Dorsolateral prefrontal cortex (tissue), 120 donors: ENCODE measurements at regions of chr16 and their contacts with region 1.

Region 1: DNA sequence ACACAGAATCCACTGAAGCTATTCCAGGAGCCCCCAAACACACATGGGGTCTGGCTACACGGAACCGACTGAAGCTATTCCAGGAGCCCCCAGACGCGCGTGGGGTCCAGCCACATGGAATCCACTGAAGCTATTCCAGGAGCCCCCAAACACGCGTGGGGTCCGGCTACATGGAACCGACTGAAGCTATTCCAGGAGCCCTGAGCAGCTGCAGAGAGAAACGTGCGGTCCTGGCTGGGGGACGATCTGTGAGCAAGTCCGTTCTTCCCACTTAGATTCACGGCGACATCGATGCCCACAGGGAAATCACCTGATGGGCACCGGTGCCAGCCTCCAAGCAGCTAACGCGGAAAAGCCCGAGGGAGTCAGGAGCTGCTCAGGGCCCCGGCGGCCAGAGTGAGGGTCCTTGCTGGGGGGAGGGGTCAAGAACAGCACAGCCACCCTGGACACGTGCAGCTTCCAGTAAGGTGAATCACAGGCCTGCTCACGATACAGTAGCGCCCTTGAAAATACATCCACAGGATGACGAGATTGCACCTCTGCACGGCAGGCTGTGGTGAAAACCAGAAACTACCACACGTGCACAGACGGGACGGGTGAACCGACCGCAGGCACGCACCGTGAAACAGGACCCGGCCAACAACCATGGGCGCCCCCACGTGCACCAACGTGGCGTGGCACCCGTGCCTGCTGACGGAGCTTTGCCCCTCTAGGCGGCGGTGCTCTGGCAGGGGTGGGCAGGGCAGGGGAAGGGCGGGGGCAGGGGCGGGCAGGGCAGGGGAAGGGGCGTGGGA is 77.7 kb upstream of the GNG13 start:
- DNase-seq: peak in 1 of 10 donors; percentile 41
- H3K4me3 ChIP-seq: no peak overlapping the region
- H3K27ac ChIP-seq: no peak overlapping the region
- H3K27me3 ChIP-seq: no peaks in the 10 kb centered on the region
- CTCF ChIP-seq: peak in 5 of 56 donors; percentile 10 to 27 (median 14)

Region 2: DNA sequence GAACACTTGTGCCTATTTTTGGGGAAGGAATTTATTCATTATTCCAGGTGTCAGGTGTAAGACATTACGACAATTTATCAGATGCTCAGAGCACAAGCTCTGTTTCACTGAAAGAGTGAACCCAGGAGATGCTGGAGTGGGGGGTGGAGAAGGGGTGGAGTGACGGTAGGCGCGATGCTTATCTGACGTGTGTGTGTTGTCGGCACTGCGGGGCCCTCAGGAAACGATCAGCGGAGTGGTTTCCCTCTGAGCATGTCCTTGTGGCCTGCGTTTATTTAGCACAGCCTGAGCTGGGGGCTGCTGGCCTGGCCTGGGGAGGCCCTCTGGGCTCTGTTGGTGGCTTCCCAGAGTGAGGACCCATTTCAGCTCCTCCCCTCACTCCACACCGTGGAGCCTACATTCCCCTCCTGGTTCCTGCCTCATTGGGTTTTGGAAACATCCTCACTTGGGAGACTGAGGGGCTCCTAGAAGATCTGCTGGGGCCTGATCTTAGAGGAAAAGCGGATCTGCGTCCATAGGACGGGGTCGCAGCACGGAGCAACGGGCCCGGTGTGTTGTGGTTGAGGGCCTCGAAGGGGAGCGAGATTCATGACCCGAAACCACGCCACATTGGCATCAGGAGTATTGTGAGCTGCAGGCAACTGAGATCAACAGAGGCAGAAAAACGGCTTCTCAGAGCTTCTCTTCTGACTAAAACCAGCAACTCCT is 58.7 kb before region 1 on chr16:
- intact Hi-C with region 1: loop called (anchors 5 to 10 kb)
- DNase-seq: no peak
- H3K4me3 ChIP-seq: no peak overlapping the region
- H3K27ac ChIP-seq: no peak overlapping the region
- H3K27me3 ChIP-seq: peaks cover 0 to 30% (median 5%) of the 10 kb centered on the region in 45 donors
- CTCF ChIP-seq: no peak

Region 3: GRCh38 chr16:931626-932500 is 53.7 kb after region 1 on chr16:
- intact Hi-C with region 1: no loop called
- DNase-seq: peak in 1 of 10 donors; percentile 16
- H3K4me3 ChIP-seq: no peak overlapping the region
- H3K27ac ChIP-seq: no peak overlapping the region
- H3K27me3 ChIP-seq: no peaks in the 10 kb centered on the region
- CTCF ChIP-seq: no peak

Region 4: DNA sequence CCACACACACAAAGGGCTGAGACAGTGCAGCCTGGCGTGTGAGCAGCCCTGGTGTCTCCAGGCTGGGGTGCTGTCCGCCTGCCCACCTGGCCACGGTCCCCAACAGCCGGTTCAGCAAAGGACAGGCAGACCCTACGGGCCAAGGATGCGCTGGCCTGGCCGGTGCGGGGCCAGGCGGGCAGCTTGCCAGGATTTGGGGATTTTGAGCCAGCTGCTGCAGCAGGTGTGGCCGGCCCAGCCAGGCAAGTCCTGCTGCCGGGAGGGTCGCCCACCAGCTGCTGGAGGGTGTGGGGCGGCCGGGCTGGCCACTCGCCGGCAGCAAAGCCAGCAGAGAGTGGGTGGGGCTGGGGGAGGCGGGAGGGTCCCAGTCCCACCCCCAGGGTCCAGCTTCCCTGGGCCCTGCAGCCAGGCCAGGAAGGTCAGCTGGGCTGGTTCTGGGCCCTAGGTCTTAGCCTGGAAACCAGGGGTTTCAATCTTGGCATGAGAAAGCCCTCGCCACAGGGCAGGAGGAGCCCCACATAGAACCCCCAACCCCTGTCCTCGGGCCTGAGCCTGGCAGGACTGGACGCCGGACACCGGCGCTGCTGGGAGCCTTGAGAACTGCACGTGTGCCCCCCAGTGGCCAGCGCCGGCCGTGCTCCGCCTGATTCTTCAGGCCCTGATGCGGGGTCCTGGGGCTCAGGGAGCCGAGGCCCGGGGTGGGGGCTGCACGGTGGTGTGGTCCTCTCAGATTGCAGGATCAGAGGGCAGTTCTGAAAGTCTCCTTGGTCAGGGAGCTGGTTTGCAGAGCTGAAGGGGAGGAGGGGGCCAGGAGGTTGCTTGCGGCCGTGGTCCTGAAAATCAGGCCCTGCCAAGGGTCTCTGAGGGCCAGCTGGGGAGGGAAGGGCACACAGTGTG is 176.7 kb after region 1 on chr16:
- intact Hi-C with region 1: loop called (anchors 5 to 10 kb)
- DNase-seq: peak; percentile 59 to 85 (median 78)
- H3K4me3 ChIP-seq: no peak overlapping the region
- H3K27ac ChIP-seq: peak overlapping the region in 31 of 59 donors; percentile 2 to 77 (median 51)
- H3K27me3 ChIP-seq: peaks cover 0 to 9% (median 0%) of the 10 kb centered on the region in 45 donors
- CTCF ChIP-seq: peak; percentile 63 to 98 (median 92)